ENCODE measurements at regions of chr11 and their contacts with region 1.

Region 1: DNA sequence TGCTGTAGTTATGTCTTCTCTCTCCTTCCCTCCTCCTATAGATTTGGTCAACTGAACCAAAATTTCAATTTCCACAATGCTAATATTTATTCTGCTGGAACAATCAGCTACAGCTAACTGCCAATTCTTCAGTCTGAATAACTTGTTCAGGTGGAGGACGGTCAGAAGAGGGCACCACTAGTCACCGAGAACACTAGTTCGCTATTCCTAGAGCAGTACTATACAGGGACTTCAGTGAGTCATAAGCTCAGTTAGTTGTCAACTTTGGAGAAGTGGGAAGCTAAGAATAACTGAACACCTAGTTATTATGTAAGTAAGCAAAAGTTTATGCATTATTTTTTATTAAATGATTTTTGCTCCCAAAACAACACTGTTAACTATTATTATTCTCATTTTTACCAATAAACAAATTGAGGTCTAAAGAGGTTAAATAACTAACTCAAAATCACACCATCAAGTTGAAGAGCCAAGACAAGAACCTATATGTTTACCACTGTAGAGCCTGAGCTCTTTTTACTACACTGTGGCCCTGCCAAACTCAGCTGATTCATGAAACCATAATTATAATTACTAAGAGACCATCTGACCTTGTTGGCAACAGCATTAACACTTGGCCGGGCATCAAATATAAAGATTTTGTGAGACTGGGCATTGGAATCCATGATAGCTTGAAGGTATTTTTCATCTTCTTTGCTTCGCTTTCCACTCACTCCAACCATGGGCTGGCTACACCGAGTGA is 59.0 kb downstream of the CEP57 start:
- DNase-seq: peak; percentile 76
- H3K4me3 Mint-ChIP-seq: no peak overlapping the region
- H3K27ac Mint-ChIP-seq: no peak overlapping the region
- H3K4me1 Mint-ChIP-seq: peaks cover 5% of the 10 kb centered on the region
- H3K27me3 Mint-ChIP-seq: no peaks in the 10 kb centered on the region
- CTCF ChIP-seq: peak; percentile 37

Region 2: GRCh38 chr11:95835768-95836488 is 13.3 kb before region 1 on chr11:
- CTCF ChIA-PET with region 1: interaction called, 20 read pairs
- POLR2A ChIA-PET with region 1: interaction called, 6 read pairs
- intact Hi-C with region 1: no loop called
- DNase-seq: peak; percentile 89
- H3K4me3 Mint-ChIP-seq: no peak overlapping the region
- H3K27ac Mint-ChIP-seq: peak overlapping the region; percentile 17
- H3K4me1 Mint-ChIP-seq: peaks cover 11% of the 10 kb centered on the region
- H3K27me3 Mint-ChIP-seq: no peaks in the 10 kb centered on the region
- CTCF ChIP-seq: peak; percentile 72

Region 3: DNA sequence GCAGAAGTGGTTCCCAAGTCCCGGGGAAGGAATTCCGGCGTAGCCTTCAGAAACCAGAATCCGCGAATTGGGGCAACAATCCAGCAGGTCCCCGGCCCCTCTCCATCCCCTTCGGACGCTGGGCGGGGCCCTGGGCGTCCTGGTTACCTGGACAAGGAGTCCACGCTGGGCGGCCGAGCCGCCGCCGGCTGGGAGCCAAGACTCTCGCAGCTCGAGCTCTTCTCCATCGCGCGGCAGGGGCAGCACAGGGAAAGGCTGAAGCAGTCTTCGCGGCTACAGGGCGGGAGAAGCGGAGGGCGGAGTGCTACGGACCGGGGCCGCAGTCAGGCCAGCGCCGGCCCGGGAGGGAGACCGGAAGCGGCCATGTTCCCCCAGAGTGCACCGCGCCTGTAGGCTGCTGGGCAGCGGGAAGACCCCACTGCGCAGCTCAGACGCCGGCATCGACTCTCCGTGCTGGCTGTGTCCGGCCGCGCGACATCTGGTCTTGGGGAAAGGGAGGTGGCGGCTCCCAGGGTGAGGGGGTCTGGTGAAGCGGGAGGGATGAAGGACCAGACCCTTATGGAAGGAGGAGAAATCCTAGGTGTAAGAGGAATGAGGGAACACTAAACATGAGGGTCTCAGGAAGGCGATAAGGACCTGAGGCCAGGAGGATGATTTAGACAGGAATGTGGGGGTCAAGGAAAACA is 74.6 kb after region 1 on chr11 and contains the start of gene MTMR2:
- CTCF ChIA-PET with region 1: interaction called, 3 read pairs
- POLR2A ChIA-PET with region 1: interaction called, 3 read pairs
- intact Hi-C with region 1: loop called (anchors 2 kb)
- DNase-seq: peak; percentile 64
- H3K4me3 Mint-ChIP-seq: peak within 1 kb of the TSS; percentile 84
- H3K27ac Mint-ChIP-seq: peak within 1 kb of the TSS; percentile 95
- H3K4me1 Mint-ChIP-seq: peaks cover 21% of the 10 kb centered on the region
- H3K27me3 Mint-ChIP-seq: no peaks in the 10 kb centered on the region
- CTCF ChIP-seq: no peak
- total RNA-seq, gene MTMR2: 49.8 and 51.9 TPM in 2 replicates

Region 4: DNA sequence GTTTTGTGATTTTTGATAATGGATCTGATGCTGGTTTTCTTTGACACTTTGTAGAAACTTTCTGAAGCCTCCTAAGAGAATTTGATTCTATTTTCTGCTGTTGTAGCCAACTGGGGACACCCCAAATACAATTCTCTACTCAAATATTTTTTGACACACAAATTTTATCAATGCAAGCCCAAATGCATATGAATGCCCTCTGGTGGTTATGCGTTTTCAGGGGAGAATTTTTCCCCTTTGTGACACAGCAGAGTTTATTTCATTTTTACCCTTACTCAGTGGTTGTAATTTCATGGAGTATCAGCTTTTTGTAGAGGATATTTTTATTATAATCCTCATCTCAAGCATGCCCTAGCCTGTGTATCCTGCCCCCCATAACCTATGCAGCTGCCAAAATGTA is 119.3 kb after region 1 on chr11:
- CTCF ChIA-PET with region 1: interaction called, 3 read pairs
- POLR2A ChIA-PET with region 1: no interaction called
- intact Hi-C with region 1: loop called (anchors 2 kb)
- DNase-seq: peak; percentile 44
- H3K4me3 Mint-ChIP-seq: no peak overlapping the region
- H3K27ac Mint-ChIP-seq: no peak overlapping the region
- H3K4me1 Mint-ChIP-seq: no peaks in the 10 kb centered on the region
- H3K27me3 Mint-ChIP-seq: no peaks in the 10 kb centered on the region
- CTCF ChIP-seq: peak; percentile 27

Region 5: GRCh38 chr11:96090711-96091110 is 241.5 kb after region 1 on chr11:
- CTCF ChIA-PET with region 1: no interaction called
- POLR2A ChIA-PET with region 1: no interaction called
- intact Hi-C with region 1: no loop called
- DNase-seq: no peak
- H3K4me3 Mint-ChIP-seq: no peak overlapping the region
- H3K27ac Mint-ChIP-seq: no peak overlapping the region
- H3K4me1 Mint-ChIP-seq: no peaks in the 10 kb centered on the region
- H3K27me3 Mint-ChIP-seq: no peaks in the 10 kb centered on the region
- CTCF ChIP-seq: no peak

Region 6: DNA sequence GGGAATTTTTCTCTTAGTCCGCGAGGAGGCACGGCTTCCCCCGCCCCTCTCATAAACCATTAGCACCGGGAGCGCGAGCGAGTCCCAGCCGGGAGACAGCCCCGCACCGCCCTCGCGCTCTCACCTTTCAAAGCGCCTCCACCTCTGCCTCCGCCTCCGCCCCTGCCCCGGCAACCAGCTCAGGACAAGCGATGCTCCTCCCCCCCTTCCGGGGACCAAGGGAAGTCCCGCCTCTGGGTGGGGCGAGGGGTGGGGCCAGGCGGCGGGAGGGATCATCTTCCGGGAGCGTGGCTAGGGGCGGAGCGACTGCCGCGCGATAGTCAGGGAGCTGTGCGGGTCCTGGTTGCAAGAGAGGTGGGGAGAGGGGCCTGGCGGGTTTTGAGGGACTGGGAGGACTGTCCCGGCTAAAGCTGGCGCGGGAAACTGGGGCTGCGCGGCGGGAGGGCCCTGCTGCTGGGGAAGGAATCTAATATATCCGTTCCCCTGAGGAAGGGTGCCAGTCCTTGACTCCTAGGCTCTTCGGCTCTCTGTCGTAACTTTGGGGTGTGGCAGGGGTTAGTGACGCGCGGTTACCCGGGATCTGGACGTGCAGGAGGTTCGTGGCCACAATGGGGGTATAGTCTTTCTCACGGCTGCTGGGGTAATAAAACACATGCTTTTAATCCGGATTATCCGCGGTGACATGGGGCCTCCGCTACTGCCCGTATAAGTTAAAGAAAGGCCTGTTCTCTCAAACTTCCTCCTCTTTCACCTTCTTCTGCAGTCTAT is 540.6 kb after region 1 on chr11 and contains the starts of genes CCDC82 and JRKL:
- CTCF ChIA-PET with region 1: interaction called, 24 read pairs
- POLR2A ChIA-PET with region 1: interaction called, 8 read pairs
- intact Hi-C with region 1: no loop called
- DNase-seq: peak; percentile 98
- H3K4me3 Mint-ChIP-seq: peak within 1 kb of the TSS; percentile 77
- H3K27ac Mint-ChIP-seq: peak within 1 kb of the TSS; percentile 93
- H3K4me1 Mint-ChIP-seq: peaks cover 11% of the 10 kb centered on the region
- H3K27me3 Mint-ChIP-seq: no peaks in the 10 kb centered on the region
- CTCF ChIP-seq: no peak
- total RNA-seq, gene CCDC82: 15.8 and 21.4 TPM in 2 replicates
- total RNA-seq, gene JRKL: 11.5 and 16.3 TPM in 2 replicates

Region 7: GRCh38 chr11:96396637-96397036 is 547.4 kb after region 1 on chr11:
- CTCF ChIA-PET with region 1: interaction called, 24 read pairs
- POLR2A ChIA-PET with region 1: interaction called, 8 read pairs
- intact Hi-C with region 1: no loop called
- DNase-seq: no peak
- H3K4me3 Mint-ChIP-seq: no peak overlapping the region
- H3K27ac Mint-ChIP-seq: no peak overlapping the region
- H3K4me1 Mint-ChIP-seq: peaks cover 3% of the 10 kb centered on the region
- H3K27me3 Mint-ChIP-seq: peaks cover 7% of the 10 kb centered on the region
- CTCF ChIP-seq: no peak

Measured in MCF 10A (cell line).